CD8-positive, alpha-beta T cell (primary cell): ENCODE measurements at regions of chr4 and their contacts with region 1.

Region 1: DNA sequence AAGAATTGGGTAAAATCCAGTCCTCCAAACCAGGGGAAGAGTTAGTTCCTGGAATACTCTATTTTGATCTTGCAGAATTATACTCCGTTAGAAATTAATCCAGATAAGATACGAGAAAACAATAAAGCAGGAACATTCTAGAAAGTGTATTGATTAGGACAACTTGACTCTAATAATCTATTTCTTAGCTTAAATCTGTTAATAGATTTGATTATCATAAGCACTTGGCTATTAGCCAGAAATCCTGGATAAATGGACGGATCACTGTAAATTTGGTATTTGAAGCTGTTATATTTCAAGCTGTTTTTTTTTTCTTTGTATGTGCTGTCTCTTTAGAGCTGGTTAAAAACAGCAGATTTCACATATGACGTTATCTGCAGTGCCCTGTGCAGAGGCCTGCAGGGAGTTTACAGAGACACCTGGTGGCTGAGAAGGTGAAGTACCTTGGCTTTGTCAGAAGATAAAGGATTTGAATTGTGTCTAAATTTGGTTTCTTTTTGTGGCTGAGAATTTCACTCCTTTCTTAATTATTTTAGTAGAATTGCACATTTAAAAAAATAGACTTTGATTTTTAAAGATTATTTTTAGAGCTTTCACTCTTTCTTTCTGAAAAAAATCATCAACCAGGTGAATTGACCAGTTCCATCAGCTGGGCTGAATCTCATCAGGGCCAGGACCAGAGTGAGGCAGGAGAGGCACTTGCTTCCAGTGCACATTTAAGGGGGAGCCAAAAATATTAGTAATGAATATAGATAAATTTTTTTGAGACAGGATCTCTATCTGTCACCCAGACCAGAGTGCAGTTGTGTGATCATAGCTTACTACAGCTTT is 9.7 kb upstream of the CHRNA9 start:
- DNase-seq: peak in 8 of 9 experiments; percentile 47 to 89 (median 69)
- ATAC-seq: peak; percentile 100
- H3K4me3 ChIP-seq: no peak overlapping the region
- H3K4me3 Mint-ChIP-seq: no peak overlapping the region
- H3K27ac ChIP-seq: no peak overlapping the region
- H3K27ac Mint-ChIP-seq: peak overlapping the region; percentile 3
- H3K4me1 ChIP-seq: peaks cover 11% of the 10 kb centered on the region
- H3K4me1 Mint-ChIP-seq: peaks cover 30% of the 10 kb centered on the region
- H3K27me3 ChIP-seq: no peaks in the 10 kb centered on the region
- H3K27me3 Mint-ChIP-seq: no peaks in the 10 kb centered on the region
- CTCF ChIP-seq: peak; percentile 99

Region 2: DNA sequence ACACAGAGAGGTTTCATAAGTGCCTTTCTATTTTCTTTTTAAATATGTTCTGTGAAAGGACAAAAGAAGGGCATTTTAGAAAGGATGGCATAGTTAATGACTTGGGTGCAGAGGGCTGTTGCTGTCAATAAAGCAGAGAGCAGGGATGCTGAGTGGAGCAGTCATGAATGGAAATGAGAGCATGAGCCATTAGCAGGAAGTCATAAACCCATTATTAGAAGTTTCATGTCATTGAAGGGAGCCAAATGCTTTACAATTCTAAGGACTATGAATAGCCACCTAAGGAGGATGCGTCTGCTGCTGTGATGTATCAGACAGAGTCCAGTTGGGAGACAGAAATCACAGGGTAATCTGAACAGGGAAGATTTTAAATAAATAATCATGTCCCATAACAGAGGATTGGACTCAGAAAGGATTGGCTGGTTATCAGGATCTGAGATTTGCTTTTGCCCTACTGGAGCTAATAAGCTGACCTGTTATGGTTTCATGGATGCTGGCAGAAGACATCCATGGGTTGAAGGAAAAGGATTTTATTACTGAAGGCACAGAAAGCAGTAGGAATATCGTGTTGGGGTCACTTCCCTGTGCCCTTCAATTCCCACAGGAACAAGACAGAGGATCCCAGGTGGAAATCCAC is 1190.6 kb before region 1 on chr4:
- CTCF ChIA-PET with region 1: no interaction called
- POLR2A ChIA-PET with region 1: no interaction called
- intact Hi-C with region 1: no loop called
- DNase-seq: no peak
- ATAC-seq: no peak
- H3K4me3 ChIP-seq: no peak overlapping the region
- H3K4me3 Mint-ChIP-seq: no peak overlapping the region
- H3K27ac ChIP-seq: no peak overlapping the region
- H3K27ac Mint-ChIP-seq: no peak overlapping the region
- H3K4me1 ChIP-seq: peaks cover 3% of the 10 kb centered on the region
- H3K4me1 Mint-ChIP-seq: peaks cover 4% of the 10 kb centered on the region
- H3K27me3 ChIP-seq: no peaks in the 10 kb centered on the region
- H3K27me3 Mint-ChIP-seq: no peaks in the 10 kb centered on the region
- CTCF ChIP-seq: no peak

Region 3: GRCh38 chr4:39697740-39698423 is 627.5 kb before region 1 on chr4 and contains the start of gene UBE2K:
- CTCF ChIA-PET with region 1: no interaction called
- POLR2A ChIA-PET with region 1: no interaction called
- intact Hi-C with region 1: loop called in 1 of 2 experiments (anchors 10 kb)
- DNase-seq: peak; percentile 73 to 95 (median 87)
- ATAC-seq: peak; percentile 82
- H3K4me3 ChIP-seq: peak within 1 kb of the TSS; percentile 97 to 100
- H3K4me3 Mint-ChIP-seq: peak within 1 kb of the TSS; percentile 99
- H3K27ac ChIP-seq: peak within 1 kb of the TSS; percentile 85 to 95
- H3K27ac Mint-ChIP-seq: peak within 1 kb of the TSS; percentile 99
- H3K4me1 ChIP-seq: peaks cover 39% of the 10 kb centered on the region
- H3K4me1 Mint-ChIP-seq: peaks cover 44% of the 10 kb centered on the region
- H3K27me3 ChIP-seq: no peaks in the 10 kb centered on the region
- H3K27me3 Mint-ChIP-seq: no peaks in the 10 kb centered on the region
- CTCF ChIP-seq: no peak
- total RNA-seq, gene UBE2K: 33.1 to 35.8 TPM

Region 4: GRCh38 chr4:39710098-39710896 is 615.1 kb before region 1 on chr4:
- CTCF ChIA-PET with region 1: no interaction called
- POLR2A ChIA-PET with region 1: no interaction called
- intact Hi-C with region 1: no loop called
- DNase-seq: no peak
- ATAC-seq: no peak
- H3K4me3 ChIP-seq: no peak overlapping the region
- H3K4me3 Mint-ChIP-seq: no peak overlapping the region
- H3K27ac ChIP-seq: no peak overlapping the region
- H3K27ac Mint-ChIP-seq: peak overlapping the region; percentile 41
- H3K4me1 ChIP-seq: peaks cover 19% of the 10 kb centered on the region
- H3K4me1 Mint-ChIP-seq: peaks cover 64% of the 10 kb centered on the region
- H3K27me3 ChIP-seq: no peaks in the 10 kb centered on the region
- H3K27me3 Mint-ChIP-seq: no peaks in the 10 kb centered on the region
- CTCF ChIP-seq: no peak

Region 5: GRCh38 chr4:40193016-40193571 is 132.3 kb before region 1 on chr4:
- CTCF ChIA-PET with region 1: interaction called, 26 read pairs
- POLR2A ChIA-PET with region 1: no interaction called
- intact Hi-C with region 1: no loop called
- DNase-seq: peak in 6 of 9 experiments; percentile 49 to 82 (median 65)
- ATAC-seq: peak; percentile 14
- H3K4me3 ChIP-seq: peak overlapping the region; percentile 36 to 42
- H3K4me3 Mint-ChIP-seq: peak overlapping the region; percentile 100
- H3K27ac ChIP-seq: peak overlapping the region; percentile 60 to 96
- H3K27ac Mint-ChIP-seq: peak overlapping the region; percentile 100
- H3K4me1 ChIP-seq: peaks cover 52% of the 10 kb centered on the region
- H3K4me1 Mint-ChIP-seq: peaks cover 64% of the 10 kb centered on the region
- H3K27me3 ChIP-seq: no peaks in the 10 kb centered on the region
- H3K27me3 Mint-ChIP-seq: no peaks in the 10 kb centered on the region
- CTCF ChIP-seq: no peak

Region 6: DNA sequence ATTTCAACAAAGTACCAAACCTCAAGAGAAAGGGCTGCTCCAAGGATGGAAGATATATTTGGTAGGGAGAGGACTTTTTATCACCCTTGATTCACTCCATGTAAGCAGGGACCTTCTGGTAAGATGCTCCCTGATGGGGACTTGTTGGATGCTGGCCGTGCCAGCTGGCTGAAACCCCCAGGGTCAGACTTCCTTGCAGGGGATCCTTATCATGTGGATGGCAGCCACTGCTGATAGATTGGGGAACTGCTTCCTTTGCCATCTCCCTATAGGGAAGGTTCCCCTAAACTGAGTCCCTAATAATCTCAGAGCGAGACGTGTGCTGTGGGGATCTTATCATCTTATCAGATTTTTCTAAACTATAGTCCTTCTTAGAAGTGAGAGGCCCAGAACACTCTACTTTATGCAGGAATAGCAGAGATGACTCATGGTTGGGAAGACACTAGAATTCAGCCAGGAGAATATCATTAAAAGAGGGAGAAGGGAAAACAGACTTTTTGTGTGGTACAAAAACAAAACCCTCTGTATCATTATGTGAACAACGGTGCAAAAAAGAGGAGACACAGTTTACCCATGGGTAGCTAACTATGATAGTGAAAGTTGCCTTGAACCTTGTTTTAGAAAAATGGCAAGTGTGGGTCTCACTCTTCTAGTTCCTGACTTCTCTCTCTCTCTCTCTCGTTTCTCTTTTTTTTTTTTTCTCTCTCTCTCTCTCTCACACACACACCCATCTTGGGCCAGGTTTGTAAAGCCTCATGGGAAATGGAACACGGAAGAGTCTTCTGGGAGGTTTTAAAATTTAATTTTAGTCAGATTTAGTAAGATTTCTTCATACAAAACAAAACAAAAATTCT is 112.5 kb before region 1 on chr4:
- CTCF ChIA-PET with region 1: interaction called, 20 read pairs
- POLR2A ChIA-PET with region 1: no interaction called
- intact Hi-C with region 1: no loop called
- DNase-seq: peak in 1 of 9 experiments; percentile 59
- ATAC-seq: no peak
- H3K4me3 ChIP-seq: peak overlapping the region; percentile 5 to 31
- H3K4me3 Mint-ChIP-seq: peak overlapping the region; percentile 67
- H3K27ac ChIP-seq: peak overlapping the region; percentile 42 to 96
- H3K27ac Mint-ChIP-seq: peak overlapping the region; percentile 95
- H3K4me1 ChIP-seq: peaks cover 89% of the 10 kb centered on the region
- H3K4me1 Mint-ChIP-seq: peaks cover 93% of the 10 kb centered on the region
- H3K27me3 ChIP-seq: no peaks in the 10 kb centered on the region
- H3K27me3 Mint-ChIP-seq: no peaks in the 10 kb centered on the region
- CTCF ChIP-seq: no peak

Region 7: GRCh38 chr4:40283968-40284367 is 41.4 kb before region 1 on chr4:
- CTCF ChIA-PET with region 1: interaction called, 16 read pairs
- POLR2A ChIA-PET with region 1: no interaction called
- intact Hi-C with region 1: no loop called
- DNase-seq: peak; percentile 53 to 94 (median 76)
- ATAC-seq: peak; percentile 93
- H3K4me3 ChIP-seq: no peak overlapping the region
- H3K4me3 Mint-ChIP-seq: peak overlapping the region; percentile 62
- H3K27ac ChIP-seq: peak overlapping the region; percentile 27 to 89
- H3K27ac Mint-ChIP-seq: peak overlapping the region; percentile 97
- H3K4me1 ChIP-seq: peaks cover 51% of the 10 kb centered on the region
- H3K4me1 Mint-ChIP-seq: peaks cover 70% of the 10 kb centered on the region
- H3K27me3 ChIP-seq: no peaks in the 10 kb centered on the region
- H3K27me3 Mint-ChIP-seq: no peaks in the 10 kb centered on the region
- CTCF ChIP-seq: peak; percentile 54